Vagina (tissue), 2 donors: ENCODE measurements at regions of chr14 and their contacts with region 1.

Region 1: DNA sequence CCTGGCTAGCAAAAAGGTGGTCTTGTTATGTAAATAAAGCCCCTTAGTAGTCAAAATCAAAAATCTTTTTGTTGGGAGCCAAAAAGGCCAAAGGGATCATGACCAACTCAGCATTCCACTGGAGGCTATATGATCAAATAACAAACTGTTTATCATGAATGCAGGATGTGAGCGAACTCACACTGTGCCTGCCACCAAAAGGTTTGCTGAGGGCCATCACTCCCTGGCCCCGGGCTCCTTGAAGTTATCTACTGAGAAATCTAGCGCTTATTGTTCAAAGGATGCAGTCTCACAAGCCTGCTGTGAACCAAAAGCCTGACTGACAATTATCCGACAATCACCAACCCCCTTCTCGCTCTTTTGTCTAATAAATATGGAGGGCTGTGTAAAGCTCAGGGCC is 107.2 kb upstream of the DDHD1 start:
- DNase-seq: no peak
- H3K4me3 ChIP-seq: no peak overlapping the region
- H3K27ac ChIP-seq: no peak overlapping the region
- H3K4me1 ChIP-seq: no peaks in the 10 kb centered on the region
- H3K27me3 ChIP-seq: no peaks in the 10 kb centered on the region
- CTCF ChIP-seq: no peak
- POLR2A ChIP-seq: no peak

Region 2: DNA sequence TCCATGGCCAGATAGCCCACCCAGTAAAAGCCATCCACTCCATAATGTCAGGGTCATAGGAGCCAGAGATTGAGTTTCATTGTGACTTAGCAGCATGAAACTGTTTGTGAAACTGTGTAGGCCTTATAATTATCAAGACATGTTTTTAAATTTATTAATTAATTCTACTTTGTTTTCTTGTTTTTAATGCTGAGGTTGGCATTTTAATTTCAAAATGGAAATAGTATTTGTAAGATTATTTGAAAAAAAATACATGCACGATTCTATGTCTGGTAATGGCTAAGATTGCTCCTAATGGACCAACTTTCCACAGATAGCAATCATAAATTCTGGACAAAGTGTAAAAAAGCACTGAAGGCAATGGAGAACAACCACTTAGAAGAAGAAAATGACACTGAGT is 640.6 kb before region 1 on chr14:
- intact Hi-C with region 1: loop called (anchors 5 kb)
- DNase-seq: no peak
- H3K4me3 ChIP-seq: no peak overlapping the region
- H3K27ac ChIP-seq: no peak overlapping the region
- H3K4me1 ChIP-seq: no peaks in the 10 kb centered on the region
- H3K27me3 ChIP-seq: no peaks in the 10 kb centered on the region
- CTCF ChIP-seq: no peak
- POLR2A ChIP-seq: no peak